ENCODE measurements at regions of chr19 and their contacts with region 1.

Region 1: DNA sequence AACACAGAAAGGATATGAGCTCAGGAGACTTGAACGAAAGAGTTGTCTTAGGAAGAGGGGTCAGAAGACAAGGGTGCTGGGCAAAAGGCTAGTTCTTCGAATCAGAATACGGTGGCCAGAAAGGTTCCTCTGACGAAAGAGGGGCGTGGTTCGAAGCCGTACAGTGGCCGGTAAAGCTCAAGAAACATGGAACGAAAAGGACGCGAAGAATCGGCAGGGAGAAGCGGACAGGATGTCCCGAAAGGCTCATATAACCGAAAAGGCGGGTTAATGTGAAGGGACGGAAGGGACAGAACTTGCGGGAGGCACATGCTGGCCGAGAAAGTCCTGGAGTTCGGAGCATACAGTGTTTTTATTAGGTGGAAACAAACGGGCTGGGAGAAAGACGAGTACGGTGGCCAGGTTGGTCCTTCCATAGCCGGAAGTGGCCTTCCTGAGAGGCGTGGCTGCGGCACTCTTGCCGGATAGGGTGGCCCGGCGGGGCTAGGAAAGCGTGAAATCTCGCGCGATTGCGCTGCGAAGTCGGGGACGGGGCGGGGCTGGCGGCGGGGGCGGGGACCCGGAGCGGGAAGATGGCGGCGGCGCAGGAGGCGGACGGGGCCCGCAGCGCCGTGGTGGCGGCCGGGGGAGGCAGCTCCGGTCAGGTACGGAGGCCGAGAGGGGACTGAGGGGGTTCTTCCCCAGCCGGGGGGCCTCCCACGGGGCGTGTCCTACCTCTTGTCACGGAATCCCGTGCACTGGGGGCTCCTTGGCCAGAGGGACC is at the start of gene CLPTM1:
- DNase-seq: peak; percentile 99
- ATAC-seq: peak; percentile 97
- H3K4me3 ChIP-seq: peak within 1 kb of the TSS; percentile 93 to 97
- H3K27ac ChIP-seq: peak within 1 kb of the TSS in 1 of 2 donors; percentile 94
- H3K4me1 ChIP-seq: no peaks in the 10 kb centered on the region
- H3K27me3 ChIP-seq: no peaks in the 10 kb centered on the region
- total RNA-seq, gene CLPTM1: 70.6 to 72.5 TPM

Region 2: DNA sequence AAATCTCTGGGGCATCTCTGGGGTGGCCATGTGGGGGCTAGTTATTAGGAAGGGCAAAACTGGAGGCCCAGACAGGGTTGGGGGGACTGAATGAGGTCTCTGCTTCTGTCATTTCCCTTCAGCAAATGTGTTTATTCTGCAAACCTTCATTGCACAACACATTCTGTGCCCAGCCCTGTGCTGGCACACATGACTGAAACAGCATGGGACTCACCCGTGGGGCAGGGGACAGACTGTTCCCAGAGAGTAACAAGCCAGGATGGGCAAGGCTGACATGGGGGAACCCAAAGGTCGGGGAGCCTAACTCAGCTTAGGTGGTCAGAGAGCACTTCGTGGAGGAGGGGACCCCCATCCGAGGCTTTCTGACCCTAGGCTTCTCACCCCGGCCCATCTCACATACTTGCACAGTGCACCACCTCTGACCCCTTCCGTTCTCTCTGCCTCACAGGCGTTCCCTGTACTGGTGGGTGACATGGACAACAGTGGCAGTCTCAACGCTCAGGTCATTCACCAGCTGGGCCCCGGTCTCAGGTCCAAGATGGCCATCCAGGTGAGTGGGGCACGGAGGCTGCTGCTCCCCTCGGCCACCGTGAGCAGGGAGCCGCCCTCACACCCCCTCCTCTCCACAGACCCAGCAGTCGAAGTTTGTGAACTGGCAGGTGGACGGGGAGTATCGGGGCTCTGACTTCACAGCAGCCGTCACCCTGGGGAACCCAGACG is 61.5 kb before region 1 on chr19:
- intact Hi-C with region 1: no loop called
- DNase-seq: no peak
- ATAC-seq: no peak
- H3K4me3 ChIP-seq: no peak overlapping the region
- H3K27ac ChIP-seq: no peak overlapping the region
- H3K4me1 ChIP-seq: no peaks in the 10 kb centered on the region
- H3K27me3 ChIP-seq: no peaks in the 10 kb centered on the region

Region 3: GRCh38 chr19:44903602-44904425 is 51.2 kb before region 1 on chr19:
- intact Hi-C with region 1: loop called (anchors 2 to 5 kb)
- DNase-seq: peak; percentile 75 to 93
- ATAC-seq: peak; percentile 86
- H3K4me3 ChIP-seq: no peak overlapping the region
- H3K27ac ChIP-seq: no peak overlapping the region
- H3K4me1 ChIP-seq: no peaks in the 10 kb centered on the region
- H3K27me3 ChIP-seq: no peaks in the 10 kb centered on the region

Region 4: DNA sequence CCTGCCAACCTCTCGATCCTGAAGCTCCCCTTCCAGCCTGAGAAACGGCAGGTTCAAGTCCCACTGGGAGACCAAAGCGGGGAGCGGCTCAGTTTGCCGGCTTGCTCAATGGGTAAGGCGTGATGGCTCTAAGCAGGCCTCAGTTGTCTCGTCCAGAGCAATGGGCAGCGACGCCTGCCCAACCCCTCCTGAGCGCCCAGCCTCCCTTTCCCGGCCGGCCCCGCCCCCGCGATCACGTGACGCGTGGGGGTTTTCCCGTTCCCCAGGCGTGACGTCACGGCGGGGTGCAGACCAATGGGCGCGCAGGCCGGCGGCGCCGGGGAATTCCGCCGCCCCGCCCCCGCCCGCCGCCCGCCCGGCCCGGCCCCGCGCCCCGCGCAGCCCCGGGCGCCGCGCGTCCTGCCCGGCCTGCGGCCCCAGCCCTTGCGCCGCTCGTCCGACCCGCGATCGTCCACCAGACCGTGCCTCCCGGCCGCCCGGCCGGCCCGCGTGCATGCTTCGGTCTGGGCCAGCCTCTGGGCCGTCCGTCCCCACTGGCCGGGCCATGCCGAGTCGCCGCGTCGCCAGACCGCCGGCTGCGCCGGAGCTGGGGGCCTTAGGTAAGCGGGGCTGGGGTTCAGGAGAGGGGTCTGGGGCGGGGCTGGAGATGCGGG is 46.2 kb after region 1 on chr19 and contains the start of gene RELB:
- intact Hi-C with region 1: loop called in 1 of 2 experiments (anchors 5 kb)
- DNase-seq: peak; percentile 97 to 99
- ATAC-seq: peak; percentile 81
- H3K4me3 ChIP-seq: peak within 1 kb of the TSS; percentile 82 to 92
- H3K27ac ChIP-seq: peak within 1 kb of the TSS; percentile 91 to 97
- H3K4me1 ChIP-seq: no peaks in the 10 kb centered on the region
- H3K27me3 ChIP-seq: no peaks in the 10 kb centered on the region
- total RNA-seq, gene RELB: 20.2 to 30.0 TPM

Measured in aorta (tissue), 5 donors.